Left ventricle myocardium inferior (tissue), 1 donor: ENCODE measurements at regions of chr10 and their contacts with region 1.

Region 1: GRCh38 chr10:95559471-95559870 is 1.7 kb downstream of the SORBS1 start:
- DNase-seq: no peak
- H3K4me3 ChIP-seq: peak overlapping the region; percentile 82
- H3K27ac ChIP-seq: peak overlapping the region; percentile 89
- H3K4me1 ChIP-seq: peaks cover 70% of the 10 kb centered on the region
- H3K27me3 ChIP-seq: no peaks in the 10 kb centered on the region
- CTCF ChIP-seq: no peak

Region 2: DNA sequence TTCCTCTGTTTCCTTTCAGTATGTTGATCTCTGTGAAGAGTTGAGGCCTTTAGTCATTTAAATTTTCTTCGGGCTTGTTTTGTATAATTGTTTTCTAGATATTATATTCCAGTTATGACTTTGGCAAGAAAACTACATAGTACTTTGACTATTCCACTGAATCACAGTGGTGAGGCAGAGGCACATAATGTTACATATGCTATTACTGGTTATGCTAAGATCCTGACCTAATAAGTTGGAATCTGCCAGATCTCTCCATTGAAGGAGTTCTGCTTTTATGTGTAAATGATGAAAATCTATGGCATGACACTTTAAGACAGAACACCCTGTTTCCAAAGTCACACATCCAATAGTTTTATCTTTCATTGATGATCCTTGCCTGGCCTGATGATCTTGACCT is 713.3 kb before region 1 on chr10:
- intact Hi-C with region 1: no loop called
- DNase-seq: no peak
- H3K4me3 ChIP-seq: no peak overlapping the region
- H3K27ac ChIP-seq: no peak overlapping the region
- H3K4me1 ChIP-seq: no peaks in the 10 kb centered on the region
- H3K27me3 ChIP-seq: no peaks in the 10 kb centered on the region
- CTCF ChIP-seq: no peak

Region 3: GRCh38 chr10:95430231-95430951 is 129.1 kb before region 1 on chr10:
- intact Hi-C with region 1: loop called (anchors 10 kb)
- DNase-seq: no peak
- H3K4me3 ChIP-seq: no peak overlapping the region
- H3K27ac ChIP-seq: peak overlapping the region; percentile 92
- H3K4me1 ChIP-seq: peaks cover 100% of the 10 kb centered on the region
- H3K27me3 ChIP-seq: no peaks in the 10 kb centered on the region
- CTCF ChIP-seq: peak; percentile 97

Region 4: DNA sequence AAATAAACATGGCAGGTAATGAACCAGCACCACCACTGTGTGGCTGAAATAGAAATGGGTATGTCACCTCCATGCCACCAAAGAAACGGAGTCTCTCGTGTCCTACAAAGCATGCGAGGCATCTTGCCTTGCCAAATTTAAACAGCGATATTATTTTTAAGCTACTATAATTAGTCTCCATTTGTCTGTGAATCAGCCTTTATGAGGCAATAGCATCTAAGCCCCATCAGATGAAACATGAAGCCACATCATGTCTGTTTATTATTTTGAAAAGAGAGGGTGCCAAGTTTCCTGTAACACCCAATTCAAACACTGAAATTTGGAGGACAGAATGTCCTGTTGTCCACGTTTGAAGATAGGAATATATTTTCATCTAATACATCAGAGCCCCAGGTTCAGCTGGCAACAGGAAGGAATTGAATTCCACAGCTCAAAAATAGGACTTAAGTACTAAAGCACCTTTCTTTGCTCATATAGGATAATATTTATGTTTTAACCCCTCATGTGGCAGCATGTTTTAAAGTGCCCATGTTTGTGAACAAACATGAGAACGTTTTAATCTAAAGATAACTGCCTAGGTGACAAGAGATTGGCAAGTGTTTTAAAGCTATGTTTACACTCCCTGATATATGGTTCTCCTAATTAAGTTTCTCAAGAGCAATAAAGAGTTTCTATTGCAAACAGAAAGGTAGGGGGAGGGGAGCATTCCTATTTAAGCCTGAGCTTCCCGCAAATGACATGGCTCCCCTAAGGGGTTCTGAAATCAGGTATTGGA is 85.1 kb before region 1 on chr10:
- intact Hi-C with region 1: loop called (anchors 10 kb)
- DNase-seq: no peak
- H3K4me3 ChIP-seq: no peak overlapping the region
- H3K27ac ChIP-seq: peak overlapping the region; percentile 92
- H3K4me1 ChIP-seq: peaks cover 98% of the 10 kb centered on the region
- H3K27me3 ChIP-seq: no peaks in the 10 kb centered on the region
- CTCF ChIP-seq: peak; percentile 44